K562 (cell line): ENCODE measurements at regions of chr16 and their contacts with region 1.

Region 1: DNA sequence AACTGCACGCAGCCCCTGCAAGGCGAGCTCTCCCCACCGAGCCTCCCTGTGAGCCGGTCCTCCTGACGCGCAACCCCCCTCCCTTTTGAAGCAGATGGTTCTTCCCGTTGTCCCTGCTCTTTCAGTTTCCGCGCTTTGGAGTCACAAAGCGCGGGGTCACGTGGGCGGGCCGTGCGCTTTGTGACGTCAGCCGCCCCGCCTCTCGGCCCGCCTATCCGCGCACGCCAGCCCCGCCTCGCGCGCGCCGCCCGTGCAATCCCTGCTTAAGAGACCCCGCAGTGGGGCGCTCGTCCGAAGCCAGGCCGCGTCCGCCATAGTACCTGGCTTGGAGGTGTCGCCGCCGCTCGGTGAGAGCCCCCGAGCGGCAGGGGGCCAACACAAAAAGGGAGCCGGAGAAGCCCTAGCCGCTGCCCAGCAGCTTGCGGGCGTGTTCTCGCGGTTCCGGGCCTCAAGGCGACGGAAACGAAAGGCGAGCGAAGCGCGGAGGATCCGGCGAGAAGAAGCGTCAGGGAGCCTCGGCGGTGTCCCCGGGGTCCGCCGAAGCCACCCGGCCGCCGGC is at the start of gene RBBP6:
- DNase-seq: peak; percentile 90 to 97 (median 92)
- ATAC-seq: peak; percentile 89
- H3K4me3 ChIP-seq: peak within 1 kb of the TSS; percentile 93
- H3K27ac ChIP-seq: peak within 1 kb of the TSS; percentile 97
- H3K4me1 ChIP-seq: peaks cover 7 to 20% of the 10 kb centered on the region in 2 experiments; a peak in 3 of 5 replicates
- H3K27me3 ChIP-seq: no peaks in the 10 kb centered on the region
- CTCF ChIP-seq: peak; percentile 49 to 70 (median 53)
- EP300 ChIP-seq: no peak; the same call in 1 of the 2 replicates
- POLR2A ChIP-seq: peak; percentile 94
- RAD21 ChIP-seq: no peak
- polyA plus RNA-seq, gene RBBP6: 21.9 to 25.6 TPM

Region 2: DNA sequence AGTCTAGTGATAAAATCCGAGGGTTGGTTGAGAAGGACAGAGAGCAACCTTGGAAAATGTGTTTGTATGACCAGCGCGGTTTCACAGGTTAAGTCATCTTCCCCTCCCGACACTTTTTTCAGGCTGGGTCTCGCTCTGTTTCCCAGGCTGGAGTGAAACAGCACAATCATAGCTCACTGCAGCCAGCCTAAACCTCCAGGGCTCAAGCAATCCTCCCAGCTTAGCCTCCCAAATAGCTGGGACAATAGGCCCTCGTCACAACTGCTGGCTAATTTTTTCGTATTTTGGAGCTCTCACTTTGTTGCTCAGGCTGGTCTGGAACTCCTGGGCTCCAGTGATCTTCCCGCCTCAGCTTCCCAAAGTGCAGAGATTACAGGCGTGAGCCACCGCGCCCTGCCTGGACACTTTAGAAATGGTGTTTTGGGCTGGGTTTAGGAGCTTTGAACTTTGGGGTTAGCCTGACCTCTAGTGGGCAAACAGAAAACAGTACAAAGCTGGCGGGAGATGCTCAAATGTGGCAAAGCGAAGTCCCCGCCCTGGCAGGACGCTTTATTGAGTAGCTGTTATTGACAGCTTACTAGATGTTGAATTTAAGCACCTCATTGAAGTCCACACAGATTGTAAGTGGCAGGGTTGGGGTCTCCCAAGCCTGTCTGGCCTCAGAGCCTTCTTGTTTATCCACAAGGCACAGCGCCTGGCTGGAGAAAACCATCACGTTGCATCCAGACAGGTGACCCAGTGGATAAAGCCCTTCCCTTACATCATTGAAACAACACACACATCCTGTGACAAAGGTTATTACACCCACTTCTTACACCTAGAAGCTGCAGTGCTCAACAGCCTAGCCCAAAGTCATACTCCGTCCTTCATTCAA is 34.7 kb before region 1 on chr16:
- CTCF ChIA-PET with region 1: no interaction called
- POLR2A ChIA-PET with region 1: no interaction called
- in situ Hi-C with region 1: no loop called
- intact Hi-C with region 1: no loop called
- DNase-seq: peak; percentile 70 to 80 (median 72)
- ATAC-seq: peak; percentile 98
- H3K4me3 ChIP-seq: no peak overlapping the region
- H3K27ac ChIP-seq: no peak overlapping the region
- H3K4me1 ChIP-seq: peaks cover 6 to 9% of the 10 kb centered on the region in 2 experiments; a peak in 3 of 5 replicates
- H3K27me3 ChIP-seq: peaks cover 3 to 16% of the 10 kb centered on the region in 2 experiments; a peak in 2 of 5 replicates
- CTCF ChIP-seq: peak; percentile 83 to 92 (median 86)
- EP300 ChIP-seq: no peak
- POLR2A ChIP-seq: no peak
- RAD21 ChIP-seq: peak; percentile 65 to 83

Region 3: GRCh38 chr16:24552705-24553246 is 13.4 kb after region 1 on chr16:
- CTCF ChIA-PET with region 1: no interaction called
- POLR2A ChIA-PET with region 1: interaction called, 71 read pairs
- in situ Hi-C with region 1: no loop called
- intact Hi-C with region 1: no loop called
- DNase-seq: no peak
- ATAC-seq: no peak
- H3K4me3 ChIP-seq: no peak overlapping the region
- H3K27ac ChIP-seq: no peak overlapping the region
- H3K4me1 ChIP-seq: no peaks in the 10 kb centered on the region
- H3K27me3 ChIP-seq: no peaks in the 10 kb centered on the region
- CTCF ChIP-seq: no peak
- EP300 ChIP-seq: no peak
- POLR2A ChIP-seq: no peak
- RAD21 ChIP-seq: no peak

Region 4: DNA sequence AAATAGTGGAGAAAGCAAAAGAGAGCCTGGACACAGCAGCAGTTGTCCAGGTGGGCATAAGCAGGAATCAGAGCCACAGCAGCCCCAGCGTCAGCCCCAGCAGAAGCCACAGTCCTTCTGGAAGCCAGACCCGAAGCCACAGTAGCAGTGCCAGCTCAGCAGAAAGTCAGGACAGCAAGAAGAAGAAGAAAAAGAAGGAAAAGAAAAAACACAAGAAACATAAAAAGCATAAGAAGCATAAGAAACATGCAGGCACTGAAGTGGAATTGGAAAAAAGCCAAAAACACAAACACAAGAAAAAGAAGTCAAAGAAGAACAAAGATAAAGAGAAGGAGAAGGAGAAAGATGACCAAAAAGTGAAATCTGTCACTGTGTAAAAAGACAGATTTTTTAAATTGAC is 32.7 kb after region 1 on chr16:
- CTCF ChIA-PET with region 1: no interaction called
- POLR2A ChIA-PET with region 1: no interaction called
- in situ Hi-C with region 1: no loop called
- intact Hi-C with region 1: no loop called
- DNase-seq: no peak
- ATAC-seq: no peak
- H3K4me3 ChIP-seq: no peak overlapping the region
- H3K27ac ChIP-seq: no peak overlapping the region
- H3K4me1 ChIP-seq: no peaks in the 10 kb centered on the region
- H3K27me3 ChIP-seq: no peaks in the 10 kb centered on the region; a peak in 1 of 5 replicates
- CTCF ChIP-seq: no peak
- EP300 ChIP-seq: no peak
- POLR2A ChIP-seq: peak; percentile 55
- RAD21 ChIP-seq: no peak